ENCODE measurements at regions of chr21 and their contacts with region 1.

Region 1: GRCh38 chr21:39867198-39867650 is at the start of gene PCP4:
- DNase-seq: no peak
- H3K4me3 ChIP-seq: peak within 1 kb of the TSS in 3 of 4 donors; percentile 9 to 47 (median 32)
- H3K27ac ChIP-seq: peak within 1 kb of the TSS; percentile 30 to 78 (median 48)
- H3K4me1 ChIP-seq: no peaks in the 10 kb centered on the region
- H3K27me3 ChIP-seq: peaks cover 0 to 13% (median 0%) of the 10 kb centered on the region in 4 donors
- CTCF ChIP-seq: peak; percentile 34 to 72 (median 66)
- POLR2A ChIP-seq: no peak
- total RNA-seq, gene PCP4: 0.83 to 82.4 (median 12.7) TPM

Region 2: DNA sequence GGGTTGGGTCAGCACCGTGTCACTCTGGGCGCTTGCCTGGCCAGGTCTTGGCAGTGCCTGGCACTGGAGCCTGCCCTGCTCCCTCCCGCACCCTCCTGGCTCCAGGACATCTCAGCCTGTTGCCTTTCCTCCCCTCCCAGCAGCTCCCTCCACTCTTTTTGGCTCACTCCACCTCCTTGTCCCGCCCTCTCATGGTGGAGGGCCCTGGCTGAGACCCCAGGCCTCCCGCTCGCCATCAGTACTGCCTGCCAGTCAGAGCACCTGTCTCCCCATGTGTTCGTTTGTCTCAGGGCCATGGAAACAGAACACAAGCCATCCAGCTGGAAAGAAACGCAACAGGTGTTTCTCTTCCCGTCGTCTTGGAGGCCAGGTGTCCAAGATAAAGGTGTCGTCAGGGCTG is 193.5 kb before region 1 on chr21:
- intact Hi-C with region 1: no loop called
- DNase-seq: no peak
- H3K4me3 ChIP-seq: no peak overlapping the region
- H3K27ac ChIP-seq: no peak overlapping the region
- H3K4me1 ChIP-seq: peaks cover 3 to 20% (median 11%) of the 10 kb centered on the region in 3 donors
- H3K27me3 ChIP-seq: peaks cover 0 to 10% (median 0%) of the 10 kb centered on the region in 4 donors
- CTCF ChIP-seq: no peak
- POLR2A ChIP-seq: no peak

Region 3: DNA sequence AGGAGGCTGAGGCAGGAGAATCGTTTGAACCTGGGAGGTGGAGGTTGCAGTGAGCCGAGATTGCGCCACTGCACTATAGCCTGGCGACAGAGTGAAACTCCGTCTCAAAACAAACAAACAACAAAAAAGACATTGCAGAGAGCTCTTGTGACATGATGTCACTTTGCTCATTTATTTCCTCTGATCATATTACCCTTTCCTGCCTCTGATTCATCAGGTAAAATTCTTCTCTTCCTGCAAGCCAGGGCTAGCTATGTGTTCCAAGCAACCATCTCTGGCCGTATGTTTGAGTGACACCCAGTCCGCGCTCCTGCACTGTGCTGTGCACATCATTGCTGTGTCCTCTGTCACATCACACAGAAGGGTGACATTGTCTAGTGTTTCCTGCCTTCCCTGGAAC is 251.3 kb after region 1 on chr21:
- intact Hi-C with region 1: loop called (anchors 5 kb)
- DNase-seq: no peak
- H3K4me3 ChIP-seq: no peak overlapping the region
- H3K27ac ChIP-seq: no peak overlapping the region
- H3K4me1 ChIP-seq: no peaks in the 10 kb centered on the region
- H3K27me3 ChIP-seq: no peaks in the 10 kb centered on the region
- CTCF ChIP-seq: no peak
- POLR2A ChIP-seq: no peak